ENCODE measurements at regions of chr3 and their contacts with region 1.

Region 1: GRCh38 chr3:187139126-187139894 is at the start of gene RPL39L:
- DNase-seq: peak; percentile 91
- H3K4me3 Mint-ChIP-seq: peak within 1 kb of the TSS; percentile 89
- H3K27ac Mint-ChIP-seq: peak within 1 kb of the TSS; percentile 94
- H3K4me1 Mint-ChIP-seq: peaks cover 32% of the 10 kb centered on the region
- H3K27me3 Mint-ChIP-seq: no peaks in the 10 kb centered on the region
- total RNA-seq, gene RPL39L: 11.0 and 13.0 TPM in 2 replicates

Region 2: GRCh38 chr3:185937689-185938463 is 1201.4 kb before region 1 on chr3 and contains the start of gene TRA2B:
- intact Hi-C with region 1: loop called (anchors 10 kb)
- DNase-seq: peak; percentile 98
- H3K4me3 Mint-ChIP-seq: peak within 1 kb of the TSS; percentile 98
- H3K27ac Mint-ChIP-seq: peak within 1 kb of the TSS; percentile 100
- H3K4me1 Mint-ChIP-seq: peaks cover 34% of the 10 kb centered on the region
- H3K27me3 Mint-ChIP-seq: peaks cover 13% of the 10 kb centered on the region
- total RNA-seq, gene TRA2B: 277 and 282 TPM in 2 replicates

Region 3: GRCh38 chr3:187025656-187026316 is 113.5 kb before region 1 on chr3:
- intact Hi-C with region 1: loop called (anchors 1 kb)
- DNase-seq: no peak
- H3K4me3 Mint-ChIP-seq: peak overlapping the region; percentile 77
- H3K27ac Mint-ChIP-seq: peak overlapping the region; percentile 89
- H3K4me1 Mint-ChIP-seq: peaks cover 51% of the 10 kb centered on the region
- H3K27me3 Mint-ChIP-seq: no peaks in the 10 kb centered on the region

Region 4: DNA sequence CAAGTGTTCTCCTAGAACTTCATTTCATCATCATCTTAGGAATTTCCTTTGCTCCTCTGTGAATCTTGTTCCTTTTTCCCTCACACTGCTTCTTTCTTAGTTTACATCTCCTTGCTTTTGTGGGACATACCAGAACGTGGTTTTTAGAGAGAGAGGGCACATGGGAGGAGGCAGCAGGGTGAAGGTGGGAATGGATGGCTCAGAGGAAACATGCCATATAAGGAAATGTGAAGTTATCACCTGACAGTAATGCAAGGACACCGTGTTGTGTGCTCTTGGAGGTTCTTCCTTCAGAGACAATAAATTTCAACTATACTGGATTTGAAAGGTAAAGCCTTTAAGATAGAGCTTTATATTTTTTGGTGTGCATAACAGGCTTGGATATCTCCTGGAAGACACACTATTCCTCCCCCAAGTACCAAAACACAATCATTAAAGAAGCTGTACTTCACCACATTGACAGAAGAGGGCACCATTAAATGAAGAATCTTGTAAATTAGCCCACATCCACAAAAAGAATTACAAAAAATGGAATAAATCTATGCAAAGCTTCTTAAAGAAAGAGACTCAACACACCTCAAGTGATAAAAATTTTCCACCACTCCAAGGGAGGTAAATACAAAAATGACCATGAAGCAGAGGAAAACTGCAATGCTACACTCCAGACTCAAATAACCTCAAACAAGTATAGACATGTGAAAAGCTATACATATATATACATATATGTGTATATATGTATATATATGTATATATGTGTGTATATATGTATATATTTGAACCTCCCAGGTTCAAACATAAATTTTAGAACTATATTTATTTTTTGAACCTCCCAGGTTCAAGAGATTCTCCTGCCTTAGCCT is 26.1 kb before region 1 on chr3:
- intact Hi-C with region 1: loop called (anchors 1 kb)
- DNase-seq: no peak
- H3K4me3 Mint-ChIP-seq: no peak overlapping the region
- H3K27ac Mint-ChIP-seq: no peak overlapping the region
- H3K4me1 Mint-ChIP-seq: peaks cover 12% of the 10 kb centered on the region
- H3K27me3 Mint-ChIP-seq: no peaks in the 10 kb centered on the region

Region 5: GRCh38 chr3:187368251-187369088 is 229.2 kb after region 1 on chr3 and contains the start of gene RTP4:
- intact Hi-C with region 1: loop called (anchors 10 kb)
- DNase-seq: peak; percentile 35
- H3K4me3 Mint-ChIP-seq: peak within 1 kb of the TSS; percentile 93
- H3K27ac Mint-ChIP-seq: peak within 1 kb of the TSS; percentile 96
- H3K4me1 Mint-ChIP-seq: peaks cover 24% of the 10 kb centered on the region
- H3K27me3 Mint-ChIP-seq: no peaks in the 10 kb centered on the region
- total RNA-seq, gene RTP4: 3.4 and 3.9 TPM in 2 replicates

Region 6: DNA sequence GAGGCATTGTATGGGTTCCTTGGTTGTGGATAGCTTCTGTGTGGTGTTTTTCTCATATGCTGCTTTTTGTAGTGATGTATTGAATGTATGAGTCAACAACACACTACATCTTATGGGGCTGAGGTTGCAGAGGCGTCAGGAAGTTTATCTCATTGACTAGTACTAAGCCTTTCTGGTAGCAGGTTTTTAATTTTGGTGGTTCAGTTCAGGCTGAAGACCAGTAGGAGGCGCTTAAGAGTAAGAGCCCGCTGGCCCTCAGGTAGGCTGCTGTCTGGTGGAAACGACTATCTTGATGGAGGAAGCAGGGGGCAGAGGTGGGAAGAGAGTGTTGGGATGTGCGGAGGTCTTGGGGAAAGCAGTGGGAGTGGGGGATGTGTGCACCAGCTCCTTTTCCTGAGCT is 291.3 kb after region 1 on chr3:
- intact Hi-C with region 1: no loop called
- DNase-seq: no peak
- H3K4me3 Mint-ChIP-seq: no peak overlapping the region
- H3K27ac Mint-ChIP-seq: no peak overlapping the region
- H3K4me1 Mint-ChIP-seq: no peaks in the 10 kb centered on the region
- H3K27me3 Mint-ChIP-seq: peaks cover 13% of the 10 kb centered on the region